Stomach (tissue), 19 donors: ENCODE measurements at regions of chr3 and their contacts with region 1.

Region 1: DNA sequence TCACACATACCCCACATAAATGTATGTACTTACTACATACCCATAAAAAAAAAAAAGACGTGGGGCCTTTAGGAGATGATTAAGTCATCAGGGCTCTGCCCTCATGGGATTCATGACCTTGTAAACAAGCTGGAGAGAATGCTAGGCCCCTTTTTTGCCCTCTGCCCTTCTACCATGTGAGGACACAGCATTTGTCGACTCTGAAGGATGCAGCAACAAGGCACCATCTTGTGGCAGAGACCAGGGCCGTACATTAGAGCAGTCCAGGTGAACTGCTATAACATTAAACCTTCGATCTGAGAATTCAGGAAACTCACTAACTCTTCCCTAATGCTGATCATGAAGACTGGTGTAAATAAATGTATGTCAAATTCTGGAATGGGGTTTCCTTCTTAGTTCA is 30.6 kb upstream of the SIAH2 start:
- DNase-seq: no peak
- H3K4me3 ChIP-seq: no peak overlapping the region
- H3K27ac ChIP-seq: no peak overlapping the region
- H3K4me1 ChIP-seq: peaks cover 0 to 12% (median 5%) of the 10 kb centered on the region in 4 donors
- H3K27me3 ChIP-seq: no peaks in the 10 kb centered on the region
- CTCF ChIP-seq: no peak
- EP300 ChIP-seq: no peak
- POLR2A ChIP-seq: no peak

Region 2: DNA sequence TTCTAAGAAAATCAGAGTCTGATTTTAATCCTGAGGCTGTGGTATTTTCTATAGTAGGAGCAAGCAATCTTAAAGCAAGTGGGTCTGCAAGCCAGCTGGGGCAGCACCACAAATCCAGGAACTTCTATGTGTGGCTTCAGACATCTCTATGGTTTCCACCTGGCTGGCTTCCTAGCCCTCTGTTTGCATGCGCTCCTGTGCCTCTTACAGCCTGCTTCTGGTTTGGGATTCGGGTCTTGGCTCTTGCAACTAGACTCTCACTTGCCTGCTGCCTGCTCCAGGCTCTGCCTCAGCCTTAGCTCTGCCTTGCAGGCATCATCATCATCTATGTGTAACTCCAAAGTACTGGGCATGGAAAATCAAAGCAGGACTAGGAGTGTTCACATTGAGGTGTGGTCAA is 68.2 kb after region 1 on chr3:
- intact Hi-C with region 1: loop called (anchors 5 kb)
- DNase-seq: no peak
- H3K4me3 ChIP-seq: no peak overlapping the region
- H3K27ac ChIP-seq: no peak overlapping the region
- H3K4me1 ChIP-seq: peaks cover 0 to 8% (median 0%) of the 10 kb centered on the region in 4 donors
- H3K27me3 ChIP-seq: no peaks in the 10 kb centered on the region
- CTCF ChIP-seq: no peak
- EP300 ChIP-seq: no peak
- POLR2A ChIP-seq: no peak